ENCODE measurements at regions of chr21 and their contacts with region 1.

Region 1: DNA sequence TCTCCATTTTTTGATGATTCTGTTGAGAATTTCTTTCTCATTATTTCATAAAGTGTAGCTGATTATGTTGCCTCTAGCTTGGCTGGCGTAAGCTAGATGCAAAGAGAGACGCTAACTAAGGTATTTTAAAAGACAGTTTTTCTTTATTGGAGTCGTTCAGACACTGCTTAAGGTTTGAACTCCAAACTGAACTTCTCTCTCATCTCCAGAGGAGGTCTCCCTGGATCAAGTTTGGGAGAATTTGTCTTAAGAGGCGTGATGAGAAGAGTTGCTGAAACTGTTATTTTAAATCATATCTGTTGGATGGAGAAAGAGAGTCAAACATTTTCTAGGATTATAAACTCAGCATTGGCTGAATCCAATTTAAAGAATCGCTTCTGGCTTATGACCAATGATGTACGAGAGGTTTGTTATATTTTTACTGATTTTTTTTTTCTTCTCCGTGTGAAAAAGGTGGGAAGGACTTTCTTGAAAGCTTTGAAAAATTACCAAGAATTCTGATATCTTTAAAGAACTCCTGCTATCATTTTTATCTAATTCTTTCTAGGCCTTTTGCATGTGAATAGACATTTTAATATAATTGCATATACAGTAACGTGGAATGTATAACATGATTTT is 34.0 kb downstream of the MAP3K7CL start:
- DNase-seq: peak; percentile 74
- H3K4me3 ChIP-seq: no peak overlapping the region
- H3K27ac ChIP-seq: peak overlapping the region; percentile 24
- H3K4me1 ChIP-seq: peaks cover 9% of the 10 kb centered on the region
- H3K27me3 ChIP-seq: no peaks in the 10 kb centered on the region
- CTCF ChIP-seq: peak; percentile 48 to 64
- POLR2A ChIP-seq: no peak

Region 2: GRCh38 chr21:27590271-27590670 is 1574.2 kb before region 1 on chr21:
- CTCF ChIA-PET with region 1: no interaction called
- POLR2A ChIA-PET with region 1: no interaction called
- dilution Hi-C with region 1: no loop called
- intact Hi-C with region 1: no loop called
- DNase-seq: peak; percentile 74
- H3K4me3 ChIP-seq: no peak overlapping the region
- H3K27ac ChIP-seq: no peak overlapping the region
- H3K4me1 ChIP-seq: no peaks in the 10 kb centered on the region
- H3K27me3 ChIP-seq: peaks cover 3 to 12% of the 10 kb centered on the region in 2 experiments
- CTCF ChIP-seq: no peak
- POLR2A ChIP-seq: no peak

Region 3: DNA sequence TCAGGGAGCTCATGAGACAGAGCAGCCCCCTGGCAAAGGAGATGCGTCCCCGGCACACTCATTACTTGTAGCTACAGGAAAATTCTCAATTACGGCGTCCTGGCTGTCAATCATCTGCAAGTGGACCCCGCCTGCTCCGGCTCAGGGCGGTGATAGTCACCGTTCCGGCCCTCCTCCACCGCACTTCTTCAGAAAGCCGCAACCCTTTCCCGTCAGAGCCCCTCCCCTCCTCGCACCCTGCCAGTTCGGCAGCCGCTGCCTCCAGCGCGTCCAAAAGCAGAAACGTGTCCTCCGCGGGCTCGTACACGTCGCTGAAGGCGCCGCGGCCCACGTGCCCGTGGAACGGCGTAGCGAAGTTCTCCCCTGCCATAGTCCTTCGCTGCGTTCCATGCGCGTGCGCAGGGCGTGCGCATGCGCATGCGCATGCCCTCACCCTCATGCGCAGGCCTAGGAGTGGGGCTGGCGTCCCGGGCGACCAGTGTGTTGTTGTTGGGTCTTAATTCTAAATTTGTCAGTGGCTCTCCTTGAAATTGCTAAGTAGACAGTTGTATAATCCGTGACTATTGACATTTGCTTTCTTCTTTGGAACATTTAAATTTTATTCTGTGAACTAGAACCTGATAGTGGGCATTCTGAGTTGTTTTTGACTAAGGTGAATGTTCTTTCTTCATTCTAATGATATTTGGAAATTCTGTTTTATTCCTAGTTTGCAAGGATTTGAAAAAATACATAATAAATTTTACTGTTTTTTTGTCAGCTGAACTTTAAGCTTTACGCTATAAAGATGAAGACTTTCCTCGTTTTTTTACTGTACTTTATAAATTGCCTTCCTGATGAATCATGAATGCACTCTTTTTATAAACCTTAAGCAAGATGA is 279.2 kb before region 1 on chr21:
- CTCF ChIA-PET with region 1: no interaction called
- POLR2A ChIA-PET with region 1: no interaction called
- dilution Hi-C with region 1: no loop called
- intact Hi-C with region 1: no loop called
- DNase-seq: peak; percentile 93
- H3K4me3 ChIP-seq: peak overlapping the region; percentile 42 to 84 (median 55)
- H3K27ac ChIP-seq: peak overlapping the region; percentile 48
- H3K4me1 ChIP-seq: peaks cover 6% of the 10 kb centered on the region
- H3K27me3 ChIP-seq: peaks cover 0 to 9% of the 10 kb centered on the region in 2 experiments
- CTCF ChIP-seq: no peak
- POLR2A ChIP-seq: peak; percentile 86

Region 4: GRCh38 chr21:29145354-29145782 is 19.1 kb before region 1 on chr21:
- CTCF ChIA-PET with region 1: interaction called, 11 read pairs
- POLR2A ChIA-PET with region 1: interaction called, 3 read pairs
- dilution Hi-C with region 1: no loop called
- intact Hi-C with region 1: loop called (anchors 1 kb)
- DNase-seq: peak; percentile 96
- H3K4me3 ChIP-seq: peak overlapping the region in 1 of 3 experiments; percentile 41
- H3K27ac ChIP-seq: peak overlapping the region; percentile 97
- H3K4me1 ChIP-seq: peaks cover 35% of the 10 kb centered on the region
- H3K27me3 ChIP-seq: no peaks in the 10 kb centered on the region
- CTCF ChIP-seq: no peak
- POLR2A ChIP-seq: no peak

Region 5: DNA sequence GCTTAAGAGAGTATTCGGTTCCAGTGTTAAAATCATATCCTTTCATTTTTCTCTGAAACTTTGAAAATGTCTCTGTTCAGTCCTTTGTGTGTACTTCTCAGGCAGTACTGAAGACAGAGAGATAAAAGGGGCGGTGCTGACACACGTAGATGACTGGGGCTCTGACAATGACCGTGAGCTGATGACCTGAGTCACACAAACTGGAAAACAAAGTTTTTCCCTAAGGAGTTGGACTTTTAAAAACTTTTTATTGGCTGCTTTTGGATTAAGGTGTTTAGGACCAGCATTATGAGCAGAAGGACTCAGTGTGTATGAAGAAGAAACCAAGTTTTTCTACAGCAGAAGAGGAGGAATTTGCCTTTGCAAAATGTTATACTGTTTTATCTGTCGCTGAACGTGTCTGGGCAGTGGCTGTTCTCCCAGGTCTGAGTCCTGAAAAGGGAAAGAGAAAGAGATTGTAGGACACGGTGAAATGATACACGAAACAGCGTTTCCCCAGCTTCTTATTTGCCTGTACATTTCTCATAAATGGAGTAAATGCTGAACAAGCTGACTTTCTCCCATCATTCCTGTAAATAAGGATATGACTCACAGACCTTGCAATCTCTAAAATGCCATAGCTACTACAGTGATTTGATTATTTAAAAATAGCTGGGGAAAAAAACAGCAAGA is 17.5 kb after region 1 on chr21:
- CTCF ChIA-PET with region 1: interaction called, 11 read pairs
- POLR2A ChIA-PET with region 1: no interaction called
- dilution Hi-C with region 1: no loop called
- intact Hi-C with region 1: no loop called
- DNase-seq: peak; percentile 90
- H3K4me3 ChIP-seq: peak overlapping the region; percentile 11 to 73 (median 32)
- H3K27ac ChIP-seq: peak overlapping the region; percentile 99
- H3K4me1 ChIP-seq: peaks cover 31% of the 10 kb centered on the region
- H3K27me3 ChIP-seq: no peaks in the 10 kb centered on the region
- CTCF ChIP-seq: no peak
- POLR2A ChIP-seq: peak; percentile 40

Region 6: DNA sequence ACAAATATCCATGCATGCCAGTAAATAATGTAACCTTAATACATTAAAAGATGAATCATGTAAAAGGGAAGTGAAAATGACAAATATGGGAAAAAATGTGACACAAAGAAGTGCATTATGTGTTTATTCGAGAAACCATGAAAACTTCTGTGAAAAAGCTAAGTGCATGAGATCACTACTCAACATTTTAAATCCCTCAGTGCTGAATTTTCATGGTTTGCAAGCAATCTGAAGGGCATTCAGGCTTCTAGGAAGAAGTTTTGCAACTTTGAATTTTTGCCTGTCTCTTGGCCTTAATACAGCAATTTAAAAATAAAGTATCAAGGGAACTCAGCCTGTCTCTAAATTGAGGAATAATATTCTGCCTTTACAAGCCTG is 44.2 kb after region 1 on chr21:
- CTCF ChIA-PET with region 1: interaction called, 11 read pairs
- POLR2A ChIA-PET with region 1: no interaction called
- dilution Hi-C with region 1: no loop called
- intact Hi-C with region 1: no loop called
- DNase-seq: peak; percentile 84
- H3K4me3 ChIP-seq: peak overlapping the region in 1 of 3 experiments; percentile 38
- H3K27ac ChIP-seq: peak overlapping the region; percentile 97
- H3K4me1 ChIP-seq: peaks cover 31% of the 10 kb centered on the region
- H3K27me3 ChIP-seq: no peaks in the 10 kb centered on the region
- CTCF ChIP-seq: no peak
- POLR2A ChIP-seq: no peak

Region 7: GRCh38 chr21:29342363-29342957 is 178.0 kb after region 1 on chr21:
- CTCF ChIA-PET with region 1: interaction called, 180 read pairs
- POLR2A ChIA-PET with region 1: no interaction called
- dilution Hi-C with region 1: no loop called
- intact Hi-C with region 1: no loop called
- DNase-seq: peak; percentile 91
- H3K4me3 ChIP-seq: no peak overlapping the region
- H3K27ac ChIP-seq: peak overlapping the region; percentile 82
- H3K4me1 ChIP-seq: peaks cover 29% of the 10 kb centered on the region
- H3K27me3 ChIP-seq: no peaks in the 10 kb centered on the region
- CTCF ChIP-seq: no peak
- POLR2A ChIP-seq: peak; percentile 33

Region 8: GRCh38 chr21:29849735-29850176 is 685.3 kb after region 1 on chr21:
- CTCF ChIA-PET with region 1: no interaction called
- POLR2A ChIA-PET with region 1: no interaction called
- dilution Hi-C with region 1: no loop called
- intact Hi-C with region 1: loop called (anchors 5 kb)
- DNase-seq: peak; percentile 60
- H3K4me3 ChIP-seq: no peak overlapping the region
- H3K27ac ChIP-seq: no peak overlapping the region
- H3K4me1 ChIP-seq: no peaks in the 10 kb centered on the region
- H3K27me3 ChIP-seq: no peaks in the 10 kb centered on the region
- CTCF ChIP-seq: peak; percentile 69 to 74
- POLR2A ChIP-seq: no peak